Activated CD8-positive, alpha-beta T cell treated with anti-CD3 and anti-CD28 coated beads, Interleukin-2, amount 10 ng/mL, durations not matched to agents 7 days and 5 days (primary cell): ENCODE measurements at regions of chr1 and their contacts with region 1.

Region 1: DNA sequence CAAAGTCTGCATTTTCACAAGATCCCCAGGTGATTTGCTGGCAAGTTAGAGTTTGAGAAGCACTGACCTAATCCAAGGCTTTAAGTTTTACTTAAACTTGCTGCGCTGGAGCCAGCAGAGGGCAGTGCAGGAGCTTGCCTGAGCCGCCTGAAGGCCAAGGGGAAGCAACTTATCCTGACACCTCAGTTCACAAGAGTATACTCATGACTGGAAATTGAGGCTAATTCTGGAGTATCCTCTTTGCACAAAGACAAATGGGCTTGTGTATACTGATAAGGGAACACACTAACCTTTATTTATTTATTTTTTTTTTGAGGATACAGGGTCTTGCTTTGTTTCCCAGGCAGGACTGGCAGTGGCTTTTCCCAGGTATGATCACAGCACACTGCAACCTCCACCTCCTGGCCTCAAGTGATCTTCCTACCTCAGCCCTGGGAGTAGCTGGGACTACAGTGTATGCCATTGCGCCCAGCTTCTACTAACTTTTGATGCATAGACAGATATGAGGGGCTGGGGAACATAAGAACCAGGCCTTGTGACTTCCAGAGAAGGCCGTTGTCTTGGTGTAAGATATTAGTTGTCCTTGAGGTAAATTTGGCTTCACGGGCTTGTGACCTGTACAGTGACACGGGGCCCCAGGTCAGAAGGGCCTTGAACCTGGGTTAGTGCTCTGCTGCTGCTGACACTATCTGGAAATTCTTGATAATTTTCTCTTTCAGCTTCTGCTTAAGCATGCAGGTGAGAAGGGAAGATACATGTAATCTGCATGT is 29.0 kb upstream of the SLAMF1 start:
- DNase-seq: peak; percentile 86
- ATAC-seq: peak; percentile 79
- H3K4me3 Mint-ChIP-seq: no peak overlapping the region
- H3K27ac Mint-ChIP-seq: peak overlapping the region; percentile 80
- H3K4me1 Mint-ChIP-seq: peaks cover 44% of the 10 kb centered on the region
- H3K27me3 Mint-ChIP-seq: no peaks in the 10 kb centered on the region

Region 2: GRCh38 chr1:160499631-160500030 is 176.2 kb before region 1 on chr1:
- CTCF ChIA-PET with region 1: no interaction called
- POLR2A ChIA-PET with region 1: no interaction called
- DNase-seq: no peak
- ATAC-seq: no peak
- H3K4me3 Mint-ChIP-seq: no peak overlapping the region
- H3K27ac Mint-ChIP-seq: no peak overlapping the region
- H3K4me1 Mint-ChIP-seq: no peaks in the 10 kb centered on the region
- H3K27me3 Mint-ChIP-seq: no peaks in the 10 kb centered on the region

Region 3: DNA sequence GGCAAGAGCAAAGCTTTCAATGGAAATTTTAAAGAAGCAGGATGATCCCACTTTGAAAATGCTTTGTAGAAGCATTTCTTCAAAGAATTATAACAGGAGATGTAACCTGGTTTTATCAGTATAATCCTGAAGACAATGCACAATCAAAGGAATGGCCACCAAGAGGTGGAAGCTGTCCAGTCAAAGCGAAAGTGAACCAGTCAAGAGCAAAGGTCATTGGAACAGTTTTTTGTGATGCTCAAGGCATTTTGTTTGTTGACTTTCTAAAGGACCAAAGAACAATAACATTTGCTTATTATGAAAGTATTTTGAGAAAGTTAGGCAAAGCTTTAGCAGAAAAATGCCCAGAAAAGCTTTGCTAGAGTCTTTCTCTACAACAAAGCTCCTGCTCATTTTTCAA is 91.0 kb before region 1 on chr1:
- CTCF ChIA-PET with region 1: no interaction called
- POLR2A ChIA-PET with region 1: no interaction called
- DNase-seq: no peak
- ATAC-seq: no peak
- H3K4me3 Mint-ChIP-seq: no peak overlapping the region
- H3K27ac Mint-ChIP-seq: no peak overlapping the region
- H3K4me1 Mint-ChIP-seq: peaks cover 32% of the 10 kb centered on the region
- H3K27me3 Mint-ChIP-seq: no peaks in the 10 kb centered on the region

Region 4: DNA sequence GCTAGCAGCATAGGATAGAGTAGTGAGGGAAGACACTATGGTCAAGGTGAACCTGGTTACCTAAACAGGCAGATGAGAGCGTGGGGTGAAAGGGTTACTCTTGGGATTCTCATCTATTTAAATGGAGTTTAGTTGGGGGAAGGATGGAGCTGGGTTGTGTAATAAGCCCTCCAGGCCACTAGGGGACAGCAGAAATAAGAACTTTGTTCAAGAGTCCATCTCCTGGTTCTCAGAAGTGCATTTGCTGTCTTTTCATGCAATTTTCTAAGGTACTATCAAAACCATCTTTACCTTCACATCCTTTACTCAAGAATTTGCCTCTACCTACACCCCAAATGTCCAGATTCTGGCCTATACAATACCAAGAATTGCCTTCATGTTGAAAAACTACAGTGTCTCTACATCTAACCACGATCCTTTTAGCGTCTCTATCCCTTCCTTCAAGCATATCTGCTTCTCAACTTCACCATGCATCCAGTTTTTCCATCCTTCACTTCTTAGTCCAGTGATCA is 57.0 kb before region 1 on chr1:
- CTCF ChIA-PET with region 1: interaction called, 84 read pairs
- POLR2A ChIA-PET with region 1: interaction called, 4 read pairs
- DNase-seq: peak; percentile 61
- ATAC-seq: no peak
- H3K4me3 Mint-ChIP-seq: no peak overlapping the region
- H3K27ac Mint-ChIP-seq: peak overlapping the region; percentile 55
- H3K4me1 Mint-ChIP-seq: peaks cover 73% of the 10 kb centered on the region
- H3K27me3 Mint-ChIP-seq: no peaks in the 10 kb centered on the region

Region 5: DNA sequence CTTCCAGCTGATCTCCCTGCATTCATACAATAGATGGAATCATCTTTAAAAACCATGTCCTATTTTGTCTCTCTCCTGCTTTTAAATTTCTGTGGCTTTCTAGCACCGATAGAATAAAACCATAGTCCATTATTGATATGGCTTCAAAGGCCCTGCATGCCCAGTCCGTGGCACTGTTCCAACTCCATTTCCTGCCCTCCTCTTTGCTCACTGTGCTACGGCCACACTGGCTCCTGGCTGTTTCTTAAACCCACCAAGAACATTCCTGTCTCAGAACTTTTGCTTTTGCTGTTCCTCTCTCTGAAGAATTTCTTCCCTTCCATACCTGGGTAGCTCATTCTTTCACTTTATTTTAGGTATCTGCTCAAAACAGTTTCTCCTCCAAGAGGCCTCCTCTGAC is 36.2 kb before region 1 on chr1:
- CTCF ChIA-PET with region 1: interaction called, 65 read pairs
- POLR2A ChIA-PET with region 1: interaction called, 3 read pairs
- DNase-seq: no peak
- ATAC-seq: no peak
- H3K4me3 Mint-ChIP-seq: peak overlapping the region; percentile 56
- H3K27ac Mint-ChIP-seq: peak overlapping the region; percentile 90
- H3K4me1 Mint-ChIP-seq: peaks cover 91% of the 10 kb centered on the region
- H3K27me3 Mint-ChIP-seq: no peaks in the 10 kb centered on the region

Region 6: DNA sequence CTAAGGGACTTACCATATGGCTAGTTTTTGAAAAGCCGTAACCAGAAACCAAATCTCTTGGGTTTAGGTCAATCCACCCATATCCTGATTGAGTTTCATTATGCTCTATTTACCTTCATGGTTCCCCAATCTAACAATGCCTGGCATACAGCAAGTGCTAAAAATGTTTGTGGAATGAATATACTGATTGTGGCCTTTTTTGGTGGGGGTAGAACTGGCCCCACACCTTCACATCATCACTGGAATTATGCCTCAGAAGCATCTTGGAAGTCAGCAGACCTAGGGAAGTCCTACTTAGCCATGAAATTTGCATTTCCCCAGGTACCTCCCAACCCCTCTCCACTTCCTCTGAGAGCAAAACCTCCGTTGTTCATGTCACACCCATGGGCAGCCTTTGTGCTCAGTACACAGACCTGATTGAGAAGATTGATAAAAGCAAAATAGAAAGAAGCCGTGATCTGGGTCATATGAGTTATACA is 11.2 kb before region 1 on chr1:
- CTCF ChIA-PET with region 1: interaction called, 60 read pairs
- POLR2A ChIA-PET with region 1: no interaction called
- DNase-seq: peak; percentile 67
- ATAC-seq: peak; percentile 82
- H3K4me3 Mint-ChIP-seq: peak overlapping the region; percentile 75
- H3K27ac Mint-ChIP-seq: peak overlapping the region; percentile 92
- H3K4me1 Mint-ChIP-seq: peaks cover 71% of the 10 kb centered on the region
- H3K27me3 Mint-ChIP-seq: no peaks in the 10 kb centered on the region

Region 7: GRCh38 chr1:160777486-160778089 is 101.8 kb after region 1 on chr1:
- CTCF ChIA-PET with region 1: interaction called, 19 read pairs
- POLR2A ChIA-PET with region 1: no interaction called
- DNase-seq: peak; percentile 66
- ATAC-seq: peak; percentile 76
- H3K4me3 Mint-ChIP-seq: no peak overlapping the region
- H3K27ac Mint-ChIP-seq: peak overlapping the region; percentile 26
- H3K4me1 Mint-ChIP-seq: peaks cover 40% of the 10 kb centered on the region
- H3K27me3 Mint-ChIP-seq: no peaks in the 10 kb centered on the region